Activated naive CD4-positive, alpha-beta T cell treated with anti-CD3 and anti-CD28 coated beads for 36 hours (primary cell): ENCODE measurements at regions of chr2 and their contacts with region 1.

Region 1: GRCh38 chr2:200713003-200713703 is 98.6 kb upstream of the BZW1 start:
- DNase-seq: peak; percentile 96
- H3K4me3 Mint-ChIP-seq: peak overlapping the region; percentile 77
- H3K27ac Mint-ChIP-seq: peak overlapping the region; percentile 100
- H3K4me1 Mint-ChIP-seq: peaks cover 32% of the 10 kb centered on the region
- H3K27me3 Mint-ChIP-seq: no peaks in the 10 kb centered on the region

Region 2: GRCh38 chr2:200725596-200725995 is 12.4 kb after region 1 on chr2:
- CTCF ChIA-PET with region 1: interaction called, 15 read pairs
- intact Hi-C with region 1: no loop called
- DNase-seq: no peak
- H3K4me3 Mint-ChIP-seq: no peak overlapping the region
- H3K27ac Mint-ChIP-seq: no peak overlapping the region
- H3K4me1 Mint-ChIP-seq: no peaks in the 10 kb centered on the region
- H3K27me3 Mint-ChIP-seq: peaks cover 4% of the 10 kb centered on the region

Region 3: GRCh38 chr2:200798514-200798913 is 85.4 kb after region 1 on chr2:
- CTCF ChIA-PET with region 1: interaction called, 4 read pairs
- intact Hi-C with region 1: loop called (anchors 1 kb)
- DNase-seq: no peak
- H3K4me3 Mint-ChIP-seq: no peak overlapping the region
- H3K27ac Mint-ChIP-seq: no peak overlapping the region
- H3K4me1 Mint-ChIP-seq: peaks cover 4% of the 10 kb centered on the region
- H3K27me3 Mint-ChIP-seq: no peaks in the 10 kb centered on the region

Region 4: DNA sequence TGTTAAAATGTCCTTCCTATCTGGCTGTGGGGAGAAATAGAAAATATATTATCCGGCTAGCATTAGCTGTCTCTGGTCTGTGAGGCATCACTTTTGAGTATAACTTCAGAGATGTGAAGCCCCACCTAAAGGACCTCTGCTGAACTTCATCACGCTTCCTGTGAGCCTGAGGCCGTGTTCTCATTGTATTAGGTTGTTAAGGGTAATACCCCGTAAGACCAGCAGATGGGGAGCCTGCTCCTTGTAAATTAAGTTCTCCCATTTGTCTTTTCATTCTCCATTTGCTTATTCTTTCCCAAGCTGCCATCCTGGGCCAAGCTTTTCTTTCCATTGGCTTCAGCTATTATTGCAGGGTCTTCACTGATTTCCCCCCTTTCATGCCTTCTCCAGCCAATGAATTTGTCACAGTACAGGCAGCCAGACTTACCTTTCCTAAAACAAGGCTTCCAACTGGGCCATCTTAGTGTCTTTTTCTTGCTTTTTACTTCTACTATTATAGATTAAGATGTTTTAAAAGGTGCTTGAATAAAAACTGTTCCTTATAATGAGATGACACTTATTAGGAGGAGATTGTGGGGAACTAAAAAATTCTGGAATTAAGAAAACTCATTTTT is 188.4 kb after region 1 on chr2:
- CTCF ChIA-PET with region 1: interaction called, 3 read pairs
- intact Hi-C with region 1: loop called (anchors 1 kb)
- DNase-seq: peak; percentile 89
- H3K4me3 Mint-ChIP-seq: no peak overlapping the region
- H3K27ac Mint-ChIP-seq: peak overlapping the region; percentile 84
- H3K4me1 Mint-ChIP-seq: peaks cover 7% of the 10 kb centered on the region
- H3K27me3 Mint-ChIP-seq: no peaks in the 10 kb centered on the region

Region 5: GRCh38 chr2:201130524-201131186 is 417.5 kb after region 1 on chr2:
- CTCF ChIA-PET with region 1: no interaction called
- intact Hi-C with region 1: loop called (anchors 1 kb)
- DNase-seq: peak; percentile 68
- H3K4me3 Mint-ChIP-seq: peak overlapping the region; percentile 76
- H3K27ac Mint-ChIP-seq: peak overlapping the region; percentile 96
- H3K4me1 Mint-ChIP-seq: peaks cover 56% of the 10 kb centered on the region
- H3K27me3 Mint-ChIP-seq: no peaks in the 10 kb centered on the region